ENCODE measurements at regions of chr5 and their contacts with region 1.

Region 1: DNA sequence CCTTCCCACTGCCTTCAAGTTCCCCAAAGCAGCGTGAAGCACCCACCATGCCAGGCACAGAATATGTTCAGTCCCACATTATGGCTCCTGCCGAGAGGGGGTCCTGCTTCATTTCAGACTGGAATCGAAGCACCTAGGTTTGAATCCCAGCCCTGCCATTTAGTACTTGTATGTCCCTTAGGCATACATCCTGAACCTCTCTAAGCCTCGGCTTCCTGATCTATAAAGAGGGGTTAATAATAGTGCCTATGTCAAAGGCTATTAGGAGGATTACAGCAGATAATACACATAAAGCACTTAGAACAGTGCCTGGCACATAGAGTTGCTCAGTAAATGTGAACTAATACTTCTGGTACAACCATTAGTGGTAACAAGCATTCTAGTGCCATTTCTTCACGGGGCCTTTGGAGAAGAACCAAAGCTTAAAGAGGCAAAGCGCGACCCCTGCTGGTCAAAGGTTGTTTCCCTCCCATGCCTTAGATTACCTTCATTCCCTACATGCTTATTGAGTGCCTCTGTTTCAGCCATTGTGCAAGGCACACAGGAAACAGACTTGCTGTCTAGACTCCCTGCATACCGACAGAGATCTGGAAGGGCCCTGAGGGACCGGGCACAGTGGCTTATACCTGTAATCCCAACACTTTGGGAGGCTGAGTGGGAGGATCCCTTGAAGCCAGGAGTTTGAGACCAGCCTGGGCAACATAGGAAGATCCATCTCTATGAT is 98.2 kb downstream of the PPARGC1B start:
- DNase-seq: peak; percentile 88
- ATAC-seq: peak; percentile 69 to 73

Region 2: DNA sequence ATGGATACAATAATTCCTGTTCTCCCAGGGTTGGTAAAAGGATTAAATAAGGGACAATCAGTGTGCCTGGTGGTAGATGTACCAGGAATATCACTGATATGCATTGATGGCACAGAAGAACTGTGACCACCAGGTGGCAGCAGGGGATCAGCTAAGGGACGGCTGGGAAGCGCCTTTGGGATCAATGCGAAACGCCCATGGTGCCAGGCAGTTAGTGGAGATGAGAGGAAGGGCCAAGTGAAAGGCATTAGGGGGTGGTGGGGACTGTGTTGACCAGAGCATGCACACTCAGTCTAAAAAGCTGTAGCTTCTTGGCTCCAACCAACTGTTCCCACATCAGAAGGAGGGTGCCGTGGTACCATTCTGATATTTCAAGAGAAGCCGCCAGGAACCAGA is 191.5 kb before region 1 on chr5:
- intact Hi-C with region 1: loop called (anchors 1 to 5 kb)
- DNase-seq: peak; percentile 41
- ATAC-seq: peak; percentile 43 to 49

Region 3: DNA sequence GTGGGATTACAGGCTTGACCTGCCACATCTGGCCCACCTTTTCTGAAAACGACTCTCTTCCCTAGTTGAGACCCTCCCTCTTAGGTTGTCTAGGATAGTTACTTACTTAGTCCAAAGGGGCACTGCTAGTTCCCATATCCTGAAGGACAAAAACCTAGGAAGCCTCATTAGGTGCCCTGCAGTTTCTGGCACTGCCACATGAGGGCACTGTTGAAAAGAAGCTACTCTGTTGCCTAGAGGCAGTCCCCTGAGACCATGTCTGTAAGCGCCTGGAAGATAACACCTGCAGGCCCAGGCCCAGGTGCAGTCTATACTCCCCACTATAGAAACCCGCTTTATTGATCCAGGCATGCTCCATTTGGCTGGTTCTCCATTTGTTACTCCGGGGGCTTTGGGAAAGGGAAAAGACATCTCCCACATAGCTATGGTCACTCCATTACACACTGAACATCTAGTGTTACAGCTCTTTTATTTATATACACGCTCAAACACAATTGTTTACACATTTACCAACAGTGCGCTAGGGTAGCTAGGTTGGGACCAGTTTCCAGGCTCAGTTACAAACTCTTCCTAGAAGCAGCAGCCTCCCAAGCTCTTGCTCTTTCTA is 171.6 kb before region 1 on chr5:
- intact Hi-C with region 1: loop called in 1 of 2 experiments (anchors 5 kb)
- DNase-seq: no peak
- ATAC-seq: peak in 1 of 2 donors; percentile 46

Region 4: DNA sequence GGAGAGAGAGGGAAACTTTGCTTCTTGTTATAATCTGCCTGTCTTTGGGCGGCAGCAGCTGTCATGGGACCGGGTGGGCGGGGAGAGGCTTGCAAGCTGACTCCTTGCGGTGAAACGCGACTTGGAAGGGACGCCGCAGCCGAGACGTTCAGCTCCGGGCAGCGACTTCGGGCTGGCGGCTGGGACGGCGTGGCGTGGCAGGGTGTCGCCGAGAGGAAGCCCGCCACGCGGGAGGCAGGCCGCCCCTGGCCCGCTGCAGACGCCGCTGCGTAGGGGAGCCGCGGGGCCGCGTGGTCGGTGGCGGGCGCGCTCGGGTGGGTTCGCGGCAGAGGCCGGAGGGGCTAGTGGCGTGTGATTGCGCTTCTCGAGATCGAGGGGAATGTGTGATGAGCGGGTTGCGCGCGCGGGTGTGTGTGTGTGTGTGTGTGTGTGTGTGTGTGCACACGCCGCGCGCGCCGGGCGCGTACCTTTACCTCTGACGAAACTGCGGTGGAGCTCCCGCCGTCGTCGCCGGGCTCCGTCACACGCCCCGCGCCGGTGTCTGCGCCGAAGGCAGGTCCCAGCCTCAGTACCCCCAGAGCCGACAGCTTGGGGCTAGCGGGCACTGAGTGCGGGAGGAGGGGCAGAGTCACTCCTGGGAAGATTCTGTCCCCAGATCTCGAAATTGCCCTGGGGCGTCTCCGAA is 96.5 kb before region 1 on chr5:
- intact Hi-C with region 1: loop called (anchors 2 kb)
- DNase-seq: peak; percentile 88
- ATAC-seq: peak; percentile 71 to 83

Region 5: DNA sequence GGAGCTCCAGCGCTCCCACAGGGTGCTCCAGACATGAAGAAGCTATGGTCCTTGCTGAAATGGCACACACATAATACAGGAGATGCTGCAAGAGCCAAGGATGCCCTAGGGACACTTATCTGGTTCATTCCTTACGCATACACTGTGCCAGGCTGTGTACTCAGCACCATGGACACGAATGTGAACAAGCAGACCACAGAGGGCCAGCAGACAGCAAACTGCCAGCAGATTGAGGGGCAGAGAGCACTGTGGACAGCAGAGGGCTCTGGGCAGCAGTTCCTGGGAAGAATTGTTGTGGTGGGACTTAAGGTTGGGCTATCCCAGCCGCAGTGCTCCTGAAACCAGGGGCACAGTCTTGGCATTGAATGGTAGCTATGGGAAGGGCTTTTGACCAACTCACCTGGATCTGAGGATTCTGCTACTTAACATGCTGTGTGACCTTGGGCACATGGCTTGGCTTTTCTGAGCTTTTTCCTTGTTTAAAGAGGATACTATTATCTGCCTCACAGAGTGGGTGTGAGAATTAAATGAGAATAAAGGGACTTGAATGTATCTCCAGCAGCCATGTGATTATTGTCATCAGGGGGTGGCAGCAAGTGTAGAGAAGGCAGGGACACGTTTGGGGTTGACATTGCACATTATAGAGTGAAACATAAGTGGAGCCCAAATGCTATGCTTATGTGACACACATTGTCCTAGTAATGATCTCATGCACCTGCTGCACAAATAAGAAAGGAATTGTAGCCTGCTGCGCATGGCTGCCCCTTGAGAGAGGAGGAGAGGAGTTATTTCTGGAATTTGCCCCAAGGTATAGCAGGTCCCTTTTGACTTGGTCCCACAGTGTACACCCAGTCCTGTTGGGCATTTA is 68.1 kb before region 1 on chr5:
- intact Hi-C with region 1: loop called in 1 of 2 experiments (anchors 5 kb)
- DNase-seq: no peak
- ATAC-seq: peak; percentile 58 to 63

Region 6: GRCh38 chr5:149792540-149793255 is 35.6 kb before region 1 on chr5:
- intact Hi-C with region 1: no loop called
- DNase-seq: no peak
- ATAC-seq: no peak

Region 7: DNA sequence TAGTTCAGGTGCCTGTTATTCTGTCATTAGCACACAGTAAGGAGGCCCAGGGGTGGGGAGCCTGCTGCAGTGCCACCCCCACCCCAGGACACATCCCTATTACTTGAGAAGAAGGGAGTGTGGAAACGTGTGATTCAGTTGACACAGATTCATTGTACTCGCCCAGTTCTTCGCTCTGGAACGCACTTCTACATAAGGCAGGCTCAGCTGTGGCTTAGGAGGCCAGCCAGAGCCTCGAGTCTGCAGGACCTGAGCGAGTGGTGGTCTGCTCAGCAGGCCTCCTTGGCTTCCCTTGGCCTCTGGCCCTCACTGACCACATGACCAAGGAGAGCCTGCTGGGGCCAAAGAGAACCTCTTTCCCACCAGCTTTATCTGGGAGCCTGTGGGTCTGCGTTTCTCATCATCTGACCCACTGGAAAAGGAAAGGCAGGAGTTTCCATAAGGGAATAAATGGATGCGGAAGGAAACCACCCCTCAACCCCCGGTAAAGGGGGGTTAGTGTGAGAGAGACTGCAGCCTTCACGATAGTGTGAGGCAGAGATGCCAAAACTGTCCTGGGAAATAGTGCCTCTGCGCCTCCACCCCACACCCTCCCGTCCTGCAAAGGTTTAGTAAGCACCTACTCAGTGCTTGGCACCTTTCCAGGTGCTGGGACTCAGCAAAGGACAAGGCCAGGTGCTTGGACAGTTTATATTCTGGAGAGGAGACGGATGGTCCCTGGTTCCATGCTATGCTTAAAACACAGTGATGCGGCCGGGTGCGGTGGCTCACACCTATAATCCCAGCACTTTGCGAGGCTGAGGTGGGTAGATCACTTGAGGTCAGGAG is 24.5 kb before region 1 on chr5:
- intact Hi-C with region 1: no loop called
- DNase-seq: no peak
- ATAC-seq: peak in 1 of 2 donors; percentile 5

Region 8: DNA sequence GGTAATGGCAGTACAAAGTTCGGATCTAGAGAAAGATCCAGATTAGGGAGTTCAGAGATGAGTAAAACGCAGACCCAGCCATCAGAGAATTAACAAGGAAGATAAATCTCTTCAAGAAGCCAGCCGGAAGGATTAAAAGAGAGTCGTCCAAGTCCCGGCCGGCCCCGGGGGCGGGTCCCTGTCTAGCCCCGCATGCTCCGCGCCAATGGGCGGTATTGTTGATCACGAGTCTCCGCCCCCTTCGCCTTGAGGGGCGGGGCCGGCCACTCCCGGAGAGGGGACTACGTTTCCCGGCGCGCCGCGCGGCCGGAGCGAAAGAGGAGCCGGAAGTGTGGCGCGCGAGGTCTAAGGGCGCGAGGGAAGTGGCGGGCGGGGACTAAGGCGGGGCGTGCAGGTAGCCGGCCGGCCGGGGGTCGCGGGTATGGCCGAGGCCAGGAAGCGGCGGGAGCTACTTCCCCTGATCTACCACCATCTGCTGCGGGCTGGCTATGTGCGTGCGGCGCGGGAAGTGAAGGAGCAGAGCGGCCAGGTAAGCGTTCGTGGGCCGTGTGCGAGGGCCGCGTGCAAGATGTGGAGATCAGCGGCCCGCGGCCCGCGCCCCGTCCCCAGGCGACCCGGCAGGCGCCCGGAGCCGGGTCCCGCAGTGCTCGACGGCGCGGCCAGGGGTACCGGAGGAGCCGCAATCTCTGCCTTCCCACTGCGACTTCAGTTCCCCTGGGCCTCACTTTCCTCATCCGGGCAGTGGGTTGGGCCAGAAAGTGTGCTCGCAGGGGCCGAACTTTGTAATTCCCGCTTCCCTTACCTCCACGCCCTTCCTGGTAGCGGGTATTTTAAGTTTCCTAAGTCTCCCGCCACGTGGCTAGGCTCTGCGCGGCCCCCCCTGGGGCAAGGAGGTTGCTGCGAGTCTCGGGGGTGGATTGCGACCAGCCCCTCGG is 529.3 kb after region 1 on chr5 and contains the start of gene TCOF1:
- intact Hi-C with region 1: loop called in 1 of 2 experiments (anchors 5 kb)
- DNase-seq: peak; percentile 98
- ATAC-seq: peak; percentile 99 to 100
- total RNA-seq, gene TCOF1: 17.4 to 18.5 TPM

Measured in left cardiac atrium (tissue), 4 donors.